ENCODE measurements at regions of chr5 and their contacts with region 1.

Region 1: DNA sequence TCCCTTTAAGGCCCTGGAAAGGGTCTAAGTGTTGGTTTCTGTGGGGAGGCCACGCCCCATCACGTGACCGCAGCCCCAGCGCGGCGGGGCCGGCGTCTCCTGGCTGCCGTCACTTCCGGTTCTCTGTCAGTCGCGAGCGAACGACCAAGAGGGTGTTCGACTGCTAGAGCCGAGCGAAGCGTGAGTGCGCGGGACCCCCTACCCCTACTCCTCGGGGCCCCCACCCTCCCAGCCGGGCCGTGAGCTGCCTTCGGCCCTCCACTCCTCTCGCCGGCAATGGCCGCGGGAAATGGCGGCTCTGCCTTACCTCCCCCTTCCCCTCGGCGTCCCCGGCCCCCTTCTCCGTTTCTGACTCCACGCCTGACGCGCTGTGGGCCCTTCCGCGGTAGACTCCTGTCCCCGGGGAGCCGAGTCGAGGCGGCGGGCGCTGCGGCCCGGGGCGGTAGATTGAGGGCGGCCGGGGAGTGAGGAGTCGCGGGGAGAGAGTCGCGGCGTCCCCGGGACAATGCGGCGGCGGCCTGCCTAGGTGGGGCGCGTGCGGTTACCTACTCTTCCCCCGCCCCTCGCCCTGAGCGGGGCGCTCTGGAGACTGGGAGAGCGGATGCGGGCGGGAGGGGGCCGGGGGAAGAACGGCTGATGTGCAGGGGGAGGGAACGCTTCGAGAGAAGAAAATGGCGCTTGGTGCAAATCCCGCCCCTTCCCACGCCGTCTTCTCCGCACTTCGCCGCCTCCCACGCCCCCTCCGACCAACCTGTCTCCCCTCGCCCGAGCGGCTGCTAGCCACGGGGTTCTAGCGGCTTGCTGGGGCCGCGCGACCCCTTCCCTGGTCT is at the start of gene SUB1:
- DNase-seq: peak; percentile 91
- H3K4me3 Mint-ChIP-seq: peak within 1 kb of the TSS; percentile 94
- H3K27ac Mint-ChIP-seq: peak within 1 kb of the TSS; percentile 99
- H3K4me1 Mint-ChIP-seq: peaks cover 70% of the 10 kb centered on the region
- H3K27me3 Mint-ChIP-seq: no peaks in the 10 kb centered on the region
- total RNA-seq, gene SUB1: 408 and 428 TPM in 2 replicates

Region 2: GRCh38 chr5:32193591-32193990 is 392.1 kb before region 1 on chr5:
- intact Hi-C with region 1: no loop called
- DNase-seq: no peak
- H3K4me3 Mint-ChIP-seq: no peak overlapping the region
- H3K27ac Mint-ChIP-seq: no peak overlapping the region
- H3K4me1 Mint-ChIP-seq: no peaks in the 10 kb centered on the region
- H3K27me3 Mint-ChIP-seq: peaks cover 9% of the 10 kb centered on the region

Region 3: GRCh38 chr5:32232441-32233219 is 353.0 kb before region 1 on chr5:
- intact Hi-C with region 1: loop called (anchors 1 kb)
- DNase-seq: peak; percentile 61
- H3K4me3 Mint-ChIP-seq: no peak overlapping the region
- H3K27ac Mint-ChIP-seq: peak overlapping the region; percentile 47
- H3K4me1 Mint-ChIP-seq: peaks cover 26% of the 10 kb centered on the region
- H3K27me3 Mint-ChIP-seq: peaks cover 1% of the 10 kb centered on the region

Region 4: GRCh38 chr5:32388432-32389129 is 197.1 kb before region 1 on chr5:
- intact Hi-C with region 1: loop called (anchors 2 kb)
- DNase-seq: no peak
- H3K4me3 Mint-ChIP-seq: peak overlapping the region; percentile 9
- H3K27ac Mint-ChIP-seq: peak overlapping the region; percentile 93
- H3K4me1 Mint-ChIP-seq: peaks cover 22% of the 10 kb centered on the region
- H3K27me3 Mint-ChIP-seq: no peaks in the 10 kb centered on the region

Region 5: DNA sequence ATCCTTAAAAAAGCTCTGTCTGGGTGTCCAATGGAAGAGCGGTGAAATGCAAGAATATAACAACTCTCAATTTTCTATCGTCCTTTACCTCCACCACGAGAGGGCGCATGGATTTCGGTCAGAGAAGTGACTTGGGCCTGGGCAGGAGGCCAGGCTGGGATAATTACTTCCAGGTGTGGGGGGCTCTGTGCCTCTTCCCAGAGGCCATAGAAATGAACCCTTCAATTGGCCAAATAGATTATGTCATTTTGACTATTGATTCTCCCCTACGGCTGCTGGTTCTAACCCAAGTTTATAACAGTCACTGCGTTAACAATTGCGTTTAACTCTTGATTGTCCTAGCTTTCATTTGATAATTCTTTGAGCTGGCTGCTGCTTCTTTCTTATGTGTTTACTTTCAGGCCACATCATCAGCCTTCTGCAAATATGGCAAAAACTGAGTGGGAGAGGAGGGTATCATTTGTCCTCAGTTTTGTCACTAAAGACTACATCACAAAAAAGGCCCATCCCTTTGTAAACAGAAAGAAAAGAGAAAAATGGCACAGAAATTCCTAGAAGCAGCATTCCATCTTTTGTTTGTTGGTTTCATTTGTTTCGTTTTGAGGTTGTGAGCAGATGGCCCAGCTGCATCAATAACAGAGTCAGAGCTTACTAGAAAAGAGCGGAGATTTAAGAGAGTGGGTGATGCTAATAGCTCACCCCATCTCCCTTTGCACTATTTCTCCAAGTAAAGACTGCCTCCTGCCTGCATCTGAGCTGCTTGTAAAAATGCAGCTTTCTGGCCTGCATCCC is 95.7 kb before region 1 on chr5:
- intact Hi-C with region 1: loop called (anchors 1 kb)
- DNase-seq: peak; percentile 59
- H3K4me3 Mint-ChIP-seq: no peak overlapping the region
- H3K27ac Mint-ChIP-seq: no peak overlapping the region
- H3K4me1 Mint-ChIP-seq: peaks cover 8% of the 10 kb centered on the region
- H3K27me3 Mint-ChIP-seq: peaks cover 3% of the 10 kb centered on the region

Region 6: GRCh38 chr5:32531885-32532520 is 53.7 kb before region 1 on chr5:
- intact Hi-C with region 1: loop called (anchors 1 kb)
- DNase-seq: peak; percentile 66
- H3K4me3 Mint-ChIP-seq: peak overlapping the region; percentile 91
- H3K27ac Mint-ChIP-seq: peak overlapping the region; percentile 98
- H3K4me1 Mint-ChIP-seq: peaks cover 62% of the 10 kb centered on the region
- H3K27me3 Mint-ChIP-seq: no peaks in the 10 kb centered on the region

Region 7: DNA sequence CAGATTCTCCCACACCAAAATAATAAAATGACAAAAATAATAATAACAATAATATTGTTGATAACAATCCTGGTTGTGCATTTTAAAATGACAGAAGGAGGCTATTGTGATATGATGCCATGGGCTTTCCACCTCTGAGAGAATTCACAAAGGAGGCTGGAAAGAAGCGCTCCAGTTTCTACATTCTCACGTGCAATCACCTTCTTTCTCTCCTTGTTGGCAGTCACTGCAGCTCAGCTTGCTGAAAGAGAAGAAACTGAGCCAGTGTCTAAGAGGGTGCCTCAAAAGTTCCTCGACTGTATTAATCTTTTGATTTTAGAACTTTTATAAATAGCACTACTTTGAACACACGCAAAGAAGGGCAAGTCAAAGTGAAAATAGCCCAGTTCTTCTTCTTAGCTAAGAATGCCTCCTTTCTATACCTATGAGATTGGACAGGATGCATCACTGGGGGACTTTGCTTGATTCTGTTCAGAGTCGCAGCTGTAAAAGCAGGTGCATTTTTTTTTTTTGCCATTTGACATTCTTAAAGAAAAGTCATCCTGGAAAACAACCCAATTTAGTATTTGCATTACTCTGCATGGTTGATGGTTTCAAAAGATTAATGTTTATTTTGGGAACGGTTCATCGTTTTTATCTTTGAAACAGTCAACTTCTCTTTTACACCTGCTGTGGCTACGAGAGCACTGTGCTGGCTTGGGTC is 12.7 kb before region 1 on chr5:
- intact Hi-C with region 1: no loop called
- DNase-seq: no peak
- H3K4me3 Mint-ChIP-seq: no peak overlapping the region
- H3K27ac Mint-ChIP-seq: no peak overlapping the region
- H3K4me1 Mint-ChIP-seq: peaks cover 10% of the 10 kb centered on the region
- H3K27me3 Mint-ChIP-seq: no peaks in the 10 kb centered on the region

Region 8: GRCh38 chr5:32613050-32613672 is 27.5 kb after region 1 on chr5:
- intact Hi-C with region 1: loop called (anchors 1 kb)
- DNase-seq: peak; percentile 72
- H3K4me3 Mint-ChIP-seq: no peak overlapping the region
- H3K27ac Mint-ChIP-seq: no peak overlapping the region
- H3K4me1 Mint-ChIP-seq: no peaks in the 10 kb centered on the region
- H3K27me3 Mint-ChIP-seq: no peaks in the 10 kb centered on the region